Activated T-helper 2 cell treated with anti-CD3 and anti-CD28 coated beads, Interferon-gamma antibody, Interleukin-2, Interleukin-4, amounts not matched to agents 10 μg/mL and 5 μg/mL and 100 μg/mL, durations not matched to agents 14 hours and 24 hours and 36 hours (primary cell): ENCODE measurements at regions of chr4 and their contacts with region 1.

Region 1: DNA sequence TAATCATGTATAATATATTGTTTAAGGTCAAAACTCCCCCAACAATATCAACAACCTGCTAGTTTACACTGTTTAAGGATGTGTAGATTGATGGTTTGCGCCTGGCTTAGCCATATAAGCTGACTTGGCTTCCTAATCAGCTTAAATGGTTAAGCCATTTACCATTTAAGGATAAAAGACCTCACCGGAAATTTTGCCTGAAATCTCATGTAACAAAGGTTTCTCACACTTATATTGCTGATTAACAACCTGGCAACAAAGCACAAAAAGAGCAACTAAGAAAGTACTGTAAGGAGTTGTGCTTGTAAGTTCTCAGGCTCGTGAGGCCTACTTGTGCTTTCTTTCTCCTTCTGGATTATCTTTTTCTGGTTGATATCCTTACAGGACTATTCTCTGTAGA is 485.2 kb downstream of the GABRG1 start:
- DNase-seq: no peak
- H3K4me3 Mint-ChIP-seq: no peak overlapping the region
- H3K27ac Mint-ChIP-seq: no peak overlapping the region
- H3K4me1 Mint-ChIP-seq: no peaks in the 10 kb centered on the region
- H3K27me3 Mint-ChIP-seq: no peaks in the 10 kb centered on the region

Region 2: GRCh38 chr4:44415251-44415650 is 1223.4 kb before region 1 on chr4:
- intact Hi-C with region 1: no loop called
- DNase-seq: no peak
- H3K4me3 Mint-ChIP-seq: no peak overlapping the region
- H3K27ac Mint-ChIP-seq: no peak overlapping the region
- H3K4me1 Mint-ChIP-seq: no peaks in the 10 kb centered on the region
- H3K27me3 Mint-ChIP-seq: no peaks in the 10 kb centered on the region

Region 3: DNA sequence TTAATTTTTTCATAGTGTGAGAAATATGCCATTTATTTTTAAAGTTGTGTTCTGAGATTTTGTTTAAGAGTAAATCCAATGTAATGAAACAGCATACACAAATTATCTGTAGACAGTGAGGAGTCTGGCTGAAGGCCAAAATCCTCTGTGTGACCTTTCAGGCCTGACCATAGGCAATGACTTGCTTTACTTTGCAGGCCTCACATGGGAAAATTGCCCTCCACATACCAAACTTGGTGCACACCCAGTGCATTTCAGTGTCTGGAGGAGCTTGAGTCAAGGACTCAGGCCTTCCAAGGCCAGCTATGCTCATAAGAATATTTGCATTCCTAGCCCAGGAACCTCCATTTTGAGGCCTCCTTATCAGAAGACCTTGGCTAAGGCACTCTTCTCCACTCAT is 55.1 kb after region 1 on chr4:
- intact Hi-C with region 1: no loop called
- DNase-seq: no peak
- H3K4me3 Mint-ChIP-seq: no peak overlapping the region
- H3K27ac Mint-ChIP-seq: no peak overlapping the region
- H3K4me1 Mint-ChIP-seq: no peaks in the 10 kb centered on the region
- H3K27me3 Mint-ChIP-seq: no peaks in the 10 kb centered on the region

Region 4: DNA sequence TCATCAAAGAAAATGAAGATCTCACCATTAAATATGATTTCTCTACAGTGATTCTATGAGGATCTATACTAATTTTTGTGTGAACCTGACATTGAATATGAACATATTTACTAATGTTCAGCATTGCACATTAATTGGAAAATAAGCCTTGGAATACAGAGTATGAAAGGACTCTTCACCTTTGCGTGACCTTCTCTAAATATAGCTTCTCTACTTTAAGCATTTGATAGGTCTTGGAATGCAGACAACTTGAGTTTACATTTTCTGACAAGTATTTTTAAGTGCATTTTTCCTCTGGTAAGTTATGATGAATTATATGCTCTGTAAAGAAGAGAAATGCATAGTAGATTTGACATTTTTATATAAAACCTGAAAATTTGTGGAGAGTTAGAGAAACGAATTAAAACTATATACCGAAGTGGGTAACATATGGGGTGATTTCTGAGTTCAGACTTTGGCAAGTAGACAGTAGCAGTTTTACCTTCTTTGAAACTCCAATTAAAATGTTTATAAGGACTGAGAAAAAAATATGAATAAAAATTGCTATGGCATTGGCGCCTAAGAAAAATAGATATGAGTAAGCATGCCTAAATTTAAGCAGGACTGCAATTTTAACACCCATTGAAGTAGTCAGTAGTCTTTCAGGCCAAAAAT is 113.4 kb after region 1 on chr4:
- intact Hi-C with region 1: loop called (anchors 5 kb)
- DNase-seq: no peak
- H3K4me3 Mint-ChIP-seq: no peak overlapping the region
- H3K27ac Mint-ChIP-seq: no peak overlapping the region
- H3K4me1 Mint-ChIP-seq: no peaks in the 10 kb centered on the region
- H3K27me3 Mint-ChIP-seq: no peaks in the 10 kb centered on the region